BJ (cell line): ENCODE measurements at regions of chr19 and their contacts with region 1.

Region 1: GRCh38 chr19:2070436-2070827 is 19.4 kb upstream of the MKNK2 start:
- DNase-seq: no peak
- H3K4me3 ChIP-seq: no peak overlapping the region
- H3K27me3 ChIP-seq: no peaks in the 10 kb centered on the region
- CTCF ChIP-seq: no peak

Region 2: DNA sequence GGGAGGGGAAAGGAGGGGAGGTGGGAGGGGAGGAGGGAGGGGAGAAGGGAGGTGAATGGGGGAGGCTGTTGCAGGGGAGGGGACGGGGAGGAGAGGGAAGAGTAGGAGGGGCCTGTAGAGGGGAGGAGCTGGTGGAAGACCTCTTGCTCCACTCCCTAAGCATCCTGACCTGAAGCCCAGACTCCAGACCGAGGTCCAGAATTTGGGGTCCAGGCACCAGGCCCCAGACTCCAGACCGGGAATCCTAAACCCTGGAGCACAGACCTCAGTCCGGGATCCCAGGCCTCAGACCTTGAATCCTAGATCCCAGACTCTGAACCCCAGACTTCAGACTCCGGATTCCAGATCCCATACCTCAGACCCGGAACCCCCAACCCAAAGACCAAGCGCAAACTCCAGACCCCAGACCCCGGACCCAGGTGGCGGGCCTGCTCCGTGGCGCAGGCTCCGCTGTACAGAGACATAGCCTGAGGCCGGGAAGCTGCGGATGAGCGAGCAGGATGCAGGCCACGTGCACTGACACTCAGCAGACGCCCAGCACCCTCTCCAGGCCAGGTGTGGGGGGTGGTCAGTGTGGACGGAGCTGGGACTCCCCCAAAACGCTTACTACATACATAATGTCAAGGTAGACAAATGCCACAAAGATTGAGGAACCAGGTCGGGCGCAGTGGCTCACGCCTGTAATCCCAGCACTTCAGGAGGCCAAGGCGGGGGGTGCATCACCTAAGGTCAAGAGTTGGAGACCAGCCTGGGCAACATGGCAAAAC is 54.2 kb before region 1 on chr19:
- CTCF ChIA-PET with region 1: interaction called, 31 read pairs
- POLR2A ChIA-PET with region 1: no interaction called
- DNase-seq: peak; percentile 15
- H3K4me3 ChIP-seq: peak overlapping the region; percentile 35
- H3K27me3 ChIP-seq: no peaks in the 10 kb centered on the region
- CTCF ChIP-seq: no peak

Region 3: DNA sequence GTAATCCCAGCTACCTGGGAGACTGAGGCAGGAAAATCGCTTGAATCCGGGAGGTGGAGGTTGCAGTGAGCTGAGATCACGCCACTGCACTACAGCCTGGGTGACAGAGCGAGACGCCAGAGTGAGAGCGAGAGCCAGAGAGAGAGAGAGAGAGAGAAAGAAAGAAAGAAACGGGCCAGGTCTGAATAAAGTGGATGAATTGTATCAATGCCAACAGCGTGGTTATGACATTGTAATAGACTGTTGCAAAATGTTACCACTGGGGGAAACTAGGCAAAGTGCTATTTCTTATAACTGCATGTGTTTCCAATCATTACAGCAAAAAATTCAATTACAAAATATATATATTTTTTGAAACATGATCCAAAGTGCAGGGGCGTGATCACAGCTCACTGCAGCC is 43.1 kb before region 1 on chr19:
- CTCF ChIA-PET with region 1: interaction called, 17 read pairs
- POLR2A ChIA-PET with region 1: no interaction called
- DNase-seq: peak; percentile 36
- H3K4me3 ChIP-seq: no peak overlapping the region
- H3K27me3 ChIP-seq: no peaks in the 10 kb centered on the region
- CTCF ChIP-seq: 0 out of 2 replicates have a peak, but pooled peaks have one; percentile 4

Region 4: GRCh38 chr19:2083174-2083854 is 12.9 kb after region 1 on chr19:
- CTCF ChIA-PET with region 1: interaction called, 11 read pairs
- POLR2A ChIA-PET with region 1: no interaction called
- DNase-seq: no peak
- H3K4me3 ChIP-seq: no peak overlapping the region
- H3K27me3 ChIP-seq: no peaks in the 10 kb centered on the region
- CTCF ChIP-seq: no peak

Region 5: GRCh38 chr19:2199215-2199614 is 128.8 kb after region 1 on chr19:
- CTCF ChIA-PET with region 1: no interaction called
- POLR2A ChIA-PET with region 1: no interaction called
- DNase-seq: no peak
- H3K4me3 ChIP-seq: no peak overlapping the region
- H3K27me3 ChIP-seq: no peaks in the 10 kb centered on the region
- CTCF ChIP-seq: peak; percentile 39